GM10248 (cell line): ENCODE measurements at regions of chr11 and their contacts with region 1.

Region 1: DNA sequence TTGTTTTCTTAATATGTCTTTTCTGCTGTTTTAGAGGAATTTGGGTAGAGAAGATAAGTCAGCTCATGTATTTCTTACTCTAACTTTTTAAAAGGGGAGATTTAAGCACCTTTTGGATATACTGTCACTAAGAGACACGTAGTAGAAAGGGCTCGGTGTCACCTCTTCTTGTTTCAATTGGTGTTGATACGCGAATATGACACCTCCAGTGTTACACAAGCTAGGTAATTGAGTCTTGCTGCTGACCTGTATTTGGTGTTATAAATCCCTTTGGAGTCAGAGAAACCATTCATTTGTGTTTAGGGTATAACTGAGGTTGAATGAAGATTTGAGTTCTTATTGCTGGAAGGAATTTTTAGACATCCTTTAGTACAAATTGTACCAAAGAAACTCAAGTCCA is 25.6 kb downstream of the FAR1 start:
- DNase-seq: no peak
- CTCF ChIP-seq: no peak

Region 2: DNA sequence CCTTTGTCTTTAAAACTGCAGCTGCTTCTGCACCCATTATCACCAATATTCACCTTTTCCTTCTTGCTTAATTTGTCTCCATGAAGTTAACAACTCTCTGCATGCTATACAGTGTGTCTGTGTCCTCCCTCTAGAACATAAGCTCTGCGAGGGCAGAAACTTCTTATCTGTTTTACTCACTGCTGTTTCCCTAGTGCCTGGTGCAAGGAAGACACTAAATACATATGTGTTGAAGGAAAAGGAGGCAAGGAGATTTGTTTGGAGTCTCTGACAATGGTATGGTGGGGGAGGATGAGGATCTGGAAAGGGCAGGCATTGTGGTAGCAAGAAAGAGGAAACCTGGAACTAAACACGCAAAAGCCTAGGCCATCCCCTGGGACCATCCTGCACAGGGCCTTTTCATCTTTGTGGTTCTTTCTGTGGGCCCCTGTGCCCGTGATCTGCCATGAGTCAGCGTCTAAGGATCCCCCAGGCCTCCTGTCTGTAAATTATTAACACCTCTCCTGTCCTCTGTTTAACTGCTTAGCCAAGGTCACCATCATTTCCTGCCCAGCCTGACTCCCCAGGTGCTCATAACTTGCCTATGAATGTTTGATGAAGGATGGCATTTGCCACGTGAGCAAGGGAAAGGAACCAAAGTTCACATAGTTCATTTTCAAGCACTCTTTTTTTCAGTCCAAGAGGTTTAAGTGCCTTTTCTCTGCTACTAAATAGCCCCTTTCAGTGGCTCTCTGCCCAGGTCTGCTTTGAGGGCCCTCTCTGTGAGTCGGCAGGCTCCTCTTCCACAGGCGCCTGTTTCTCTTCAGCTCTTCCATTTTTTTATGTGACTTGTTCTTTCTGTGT is 553.9 kb before region 1 on chr11:
- CTCF ChIA-PET with region 1: no interaction called
- POLR2A ChIA-PET with region 1: no interaction called
- DNase-seq: peak; percentile 34
- CTCF ChIP-seq: no peak

Region 3: DNA sequence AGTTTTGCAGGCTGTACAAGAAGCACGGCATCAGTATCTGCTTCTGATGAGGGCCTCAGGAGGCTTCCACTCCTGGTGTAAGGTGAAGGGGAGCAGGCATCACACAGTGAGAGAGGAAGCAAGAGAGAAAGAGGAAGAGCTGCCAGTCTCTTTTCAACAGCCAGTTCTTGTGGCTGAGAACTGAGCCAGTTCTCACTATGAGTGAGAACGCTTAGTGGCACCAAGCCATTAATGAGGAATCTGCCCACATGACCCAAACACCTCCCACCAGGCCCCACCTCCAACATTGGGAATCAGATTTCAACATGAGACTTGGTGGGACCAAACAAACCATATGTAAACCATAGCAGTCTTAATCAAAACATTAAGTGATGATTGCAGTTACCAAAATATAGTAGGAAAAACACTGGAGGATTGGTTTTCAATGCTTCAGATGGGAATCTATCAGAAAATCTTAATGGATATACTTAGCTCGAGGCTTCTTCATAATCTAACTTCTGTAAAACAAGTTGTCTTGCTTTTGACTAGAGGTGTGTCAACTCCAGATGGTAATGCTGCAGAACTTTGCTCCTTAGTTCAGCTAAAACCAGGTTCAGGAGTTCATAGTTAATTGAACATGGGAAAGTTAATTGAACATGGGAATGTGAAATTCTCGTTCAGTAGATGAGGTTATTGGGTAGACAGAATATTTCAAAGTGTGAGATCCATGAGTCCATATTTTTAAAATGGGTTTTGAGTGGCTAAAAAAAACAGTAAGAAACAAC is 13.4 kb before region 1 on chr11:
- CTCF ChIA-PET with region 1: interaction called, 10 read pairs
- POLR2A ChIA-PET with region 1: no interaction called
- DNase-seq: no peak
- CTCF ChIP-seq: no peak